ENCODE measurements at regions of chr19 and their contacts with region 1.

Region 1: DNA sequence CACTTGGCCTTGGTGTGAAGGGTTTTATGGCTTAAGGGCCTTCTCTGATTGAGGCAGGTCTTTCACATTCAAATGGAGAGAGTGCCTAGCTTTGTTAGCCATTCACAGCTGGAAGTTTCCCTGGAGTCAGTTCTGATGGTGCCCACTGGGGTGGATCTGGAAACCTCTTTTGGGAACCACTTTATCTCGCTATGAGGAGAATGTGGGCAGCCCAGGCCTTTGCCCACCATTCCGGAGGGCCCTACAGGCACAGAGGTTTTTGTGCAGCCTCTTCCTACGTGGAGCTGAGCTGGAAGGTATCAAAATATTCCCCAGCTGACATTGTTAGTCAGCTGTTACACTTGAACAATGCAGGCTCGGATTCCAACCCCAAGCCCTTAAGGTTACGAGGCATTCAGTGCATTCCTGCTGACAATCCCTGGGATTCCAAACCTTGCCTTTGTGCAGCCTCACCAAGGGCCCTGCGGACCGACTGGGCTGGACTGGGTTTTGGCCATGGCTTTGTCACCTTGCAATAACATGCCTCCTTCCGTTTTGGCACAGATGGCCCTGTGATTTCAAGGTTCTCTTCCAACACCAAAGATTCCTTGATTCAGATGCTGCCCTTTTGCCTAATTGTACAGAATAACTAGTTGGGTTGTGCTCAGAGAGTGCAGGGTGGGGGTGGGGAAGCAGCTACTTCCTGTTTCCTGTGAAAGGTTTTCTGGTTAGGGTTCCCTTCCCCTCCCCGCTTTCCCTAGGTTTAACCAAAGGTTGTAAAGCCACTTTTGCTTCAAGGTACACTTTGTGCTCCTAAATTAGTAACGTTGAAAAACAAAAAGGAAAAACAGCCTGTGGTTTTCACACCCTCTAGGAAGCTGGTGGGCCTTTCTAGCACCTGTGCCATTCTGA is 27.0 kb downstream of the SAE1 start:
- DNase-seq: no peak
- ATAC-seq: peak; percentile 19
- H3K4me3 Mint-ChIP-seq: peak overlapping the region; percentile 73
- H3K27ac Mint-ChIP-seq: peak overlapping the region; percentile 86
- H3K4me1 Mint-ChIP-seq: peaks cover 39% of the 10 kb centered on the region
- H3K27me3 Mint-ChIP-seq: no peaks in the 10 kb centered on the region

Region 2: GRCh38 chr19:47145639-47146486 is 11.8 kb before region 1 on chr19:
- POLR2A ChIA-PET with region 1: interaction called, 22 read pairs
- DNase-seq: no peak
- ATAC-seq: peak; percentile 89
- H3K4me3 Mint-ChIP-seq: peak overlapping the region; percentile 60
- H3K27ac Mint-ChIP-seq: peak overlapping the region; percentile 89
- H3K4me1 Mint-ChIP-seq: peaks cover 46% of the 10 kb centered on the region
- H3K27me3 Mint-ChIP-seq: no peaks in the 10 kb centered on the region

Region 3: GRCh38 chr19:47186446-47187334 is 29.0 kb after region 1 on chr19:
- POLR2A ChIA-PET with region 1: interaction called, 41 read pairs
- DNase-seq: peak; percentile 69
- ATAC-seq: peak; percentile 81
- H3K4me3 Mint-ChIP-seq: peak overlapping the region; percentile 81
- H3K27ac Mint-ChIP-seq: peak overlapping the region; percentile 99
- H3K4me1 Mint-ChIP-seq: peaks cover 60% of the 10 kb centered on the region
- H3K27me3 Mint-ChIP-seq: no peaks in the 10 kb centered on the region

Region 4: GRCh38 chr19:47210689-47211316 is 53.1 kb after region 1 on chr19:
- POLR2A ChIA-PET with region 1: interaction called, 10 read pairs
- DNase-seq: peak; percentile 66
- ATAC-seq: peak; percentile 77
- H3K4me3 Mint-ChIP-seq: peak overlapping the region; percentile 21
- H3K27ac Mint-ChIP-seq: peak overlapping the region; percentile 96
- H3K4me1 Mint-ChIP-seq: peaks cover 10% of the 10 kb centered on the region
- H3K27me3 Mint-ChIP-seq: no peaks in the 10 kb centered on the region

Measured in activated naive CD8-positive, alpha-beta T cell treated with anti-CD3 and anti-CD28 coated beads, Interleukin-2, amount 10 ng/mL, durations not matched to agents 7 days and 5 days (primary cell).